ENCODE measurements at regions of chr1 and their contacts with region 1.

Region 1: DNA sequence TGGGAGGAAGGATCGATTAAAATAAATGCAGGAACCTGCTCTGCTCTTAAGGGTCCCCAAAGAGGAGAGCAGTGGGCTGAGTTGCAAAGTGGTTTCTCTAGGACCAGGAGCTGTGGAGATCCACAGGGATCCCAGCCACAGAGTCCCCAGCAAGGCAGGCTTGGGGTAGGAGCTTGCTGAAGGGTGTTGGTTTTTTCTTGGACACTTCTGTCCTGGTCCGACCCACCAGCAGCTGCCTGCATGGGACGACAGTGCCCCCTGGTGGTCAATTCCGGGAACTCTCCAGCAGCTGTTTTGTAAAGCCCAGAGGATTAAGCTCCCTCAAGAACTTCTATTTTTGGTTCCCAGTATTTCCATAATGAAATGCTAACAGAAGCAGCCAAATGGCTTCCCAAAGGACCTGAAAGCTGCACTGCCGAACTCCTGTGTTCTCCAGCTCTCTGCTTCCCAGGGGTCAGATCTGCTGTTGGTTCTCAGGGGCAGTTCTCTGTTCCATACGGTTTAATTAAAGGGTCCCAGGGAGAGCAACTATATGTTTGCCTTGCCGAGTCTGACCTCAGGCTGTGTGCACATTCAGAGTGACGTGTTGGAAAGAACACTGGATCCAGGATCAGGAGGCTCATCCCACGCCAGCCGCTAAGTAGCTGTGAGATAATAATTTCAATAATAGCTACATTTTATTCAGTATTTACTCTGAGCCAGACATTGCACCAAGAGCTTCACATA is 23.2 kb downstream of the NENF start:
- DNase-seq: peak; percentile 91
- ATAC-seq: peak; percentile 78
- H3K4me3 Mint-ChIP-seq: no peak overlapping the region
- H3K27ac Mint-ChIP-seq: no peak overlapping the region
- H3K4me1 Mint-ChIP-seq: peaks cover 4% of the 10 kb centered on the region
- H3K27me3 Mint-ChIP-seq: no peaks in the 10 kb centered on the region
- CTCF ChIP-seq: peak; percentile 99

Region 2: GRCh38 chr1:211698161-211699026 is 757.6 kb before region 1 on chr1:
- CTCF ChIA-PET with region 1: interaction called, 30 read pairs
- POLR2A ChIA-PET with region 1: no interaction called
- intact Hi-C with region 1: no loop called
- DNase-seq: peak; percentile 92
- ATAC-seq: peak; percentile 95
- H3K4me3 Mint-ChIP-seq: peak overlapping the region; percentile 33
- H3K27ac Mint-ChIP-seq: no peak overlapping the region
- H3K4me1 Mint-ChIP-seq: peaks cover 24% of the 10 kb centered on the region
- H3K27me3 Mint-ChIP-seq: peaks cover 1% of the 10 kb centered on the region
- CTCF ChIP-seq: peak; percentile 95

Region 3: DNA sequence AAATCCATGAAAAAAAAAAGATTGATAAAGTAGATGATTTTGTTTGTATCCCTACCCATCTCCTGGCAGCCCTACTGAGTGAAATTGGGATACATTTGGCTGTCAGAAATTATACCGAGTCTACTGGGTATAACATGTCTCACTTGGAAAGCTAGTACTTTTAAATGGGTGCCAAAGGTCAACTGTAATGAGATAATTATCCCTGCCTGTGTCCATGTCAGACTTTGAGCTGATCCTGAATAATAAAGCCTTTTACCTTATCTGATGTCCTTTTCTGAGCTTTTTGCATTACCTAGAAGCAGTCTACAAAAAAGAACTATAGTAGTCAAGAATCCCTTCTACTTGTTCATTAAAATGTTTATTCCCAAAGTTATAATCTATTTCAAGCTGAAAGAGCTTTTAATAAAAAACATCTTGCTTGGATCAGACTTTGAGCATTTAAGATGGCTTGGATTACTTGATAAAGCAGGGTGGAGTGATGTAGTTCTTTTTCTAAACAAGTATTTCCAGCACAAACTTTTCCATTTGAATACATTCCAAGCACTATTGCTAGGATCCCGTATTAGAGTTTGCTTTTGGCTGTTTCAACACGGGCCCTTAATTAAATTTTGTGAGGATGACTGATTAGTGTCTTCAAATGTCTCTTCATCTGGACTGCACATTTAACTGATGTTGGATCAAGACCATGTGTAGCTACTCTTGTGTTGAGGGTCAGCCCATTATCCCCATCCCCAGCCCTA is 351.2 kb before region 1 on chr1:
- CTCF ChIA-PET with region 1: interaction called, 24 read pairs
- POLR2A ChIA-PET with region 1: no interaction called
- intact Hi-C with region 1: no loop called
- DNase-seq: no peak
- ATAC-seq: no peak
- H3K4me3 Mint-ChIP-seq: no peak overlapping the region
- H3K27ac Mint-ChIP-seq: no peak overlapping the region
- H3K4me1 Mint-ChIP-seq: peaks cover 19% of the 10 kb centered on the region
- H3K27me3 Mint-ChIP-seq: no peaks in the 10 kb centered on the region
- CTCF ChIP-seq: no peak

Region 4: DNA sequence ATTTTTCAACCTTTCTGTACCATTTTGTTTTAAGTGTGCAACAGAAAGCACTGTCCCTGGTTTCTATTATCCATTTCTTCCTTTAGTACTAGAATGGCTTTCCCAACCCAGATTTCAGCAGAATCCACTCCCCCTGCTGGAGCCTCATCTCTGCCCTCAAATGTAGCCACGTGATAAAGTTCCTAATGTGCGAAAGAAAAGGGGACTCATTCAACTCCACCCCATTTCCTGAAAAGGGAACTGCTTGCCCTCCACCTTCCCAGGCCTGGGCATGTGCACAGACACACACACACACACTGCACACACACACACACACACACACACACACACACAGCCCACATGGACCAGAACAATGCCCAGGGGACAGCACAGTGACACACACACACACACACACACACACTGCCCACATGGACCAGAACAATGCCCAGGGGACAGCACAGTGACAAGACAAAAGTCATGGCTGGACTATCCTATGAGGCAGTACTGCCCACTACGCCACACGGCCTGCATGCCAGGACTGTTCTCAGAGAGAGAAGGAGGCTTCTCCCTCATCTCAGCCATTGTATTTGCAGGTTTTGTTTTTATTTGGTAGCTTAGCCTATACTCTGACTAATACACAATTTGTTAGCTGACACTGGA is 74.5 kb before region 1 on chr1:
- CTCF ChIA-PET with region 1: interaction called, 35 read pairs
- POLR2A ChIA-PET with region 1: no interaction called
- intact Hi-C with region 1: no loop called
- DNase-seq: no peak
- ATAC-seq: no peak
- H3K4me3 Mint-ChIP-seq: no peak overlapping the region
- H3K27ac Mint-ChIP-seq: no peak overlapping the region
- H3K4me1 Mint-ChIP-seq: no peaks in the 10 kb centered on the region
- H3K27me3 Mint-ChIP-seq: no peaks in the 10 kb centered on the region
- CTCF ChIP-seq: no peak

Region 5: GRCh38 chr1:212477014-212477679 is 21.2 kb after region 1 on chr1:
- CTCF ChIA-PET with region 1: interaction called, 104 read pairs
- POLR2A ChIA-PET with region 1: interaction called, 3 read pairs
- intact Hi-C with region 1: no loop called
- DNase-seq: peak; percentile 87
- ATAC-seq: peak; percentile 93
- H3K4me3 Mint-ChIP-seq: no peak overlapping the region
- H3K27ac Mint-ChIP-seq: no peak overlapping the region
- H3K4me1 Mint-ChIP-seq: peaks cover 22% of the 10 kb centered on the region
- H3K27me3 Mint-ChIP-seq: peaks cover 7% of the 10 kb centered on the region
- CTCF ChIP-seq: peak; percentile 84

Region 6: GRCh38 chr1:212595787-212596714 is 140.1 kb after region 1 on chr1:
- CTCF ChIA-PET with region 1: no interaction called
- POLR2A ChIA-PET with region 1: no interaction called
- intact Hi-C with region 1: no loop called
- DNase-seq: peak; percentile 70
- ATAC-seq: peak; percentile 92
- H3K4me3 Mint-ChIP-seq: peak overlapping the region; percentile 62
- H3K27ac Mint-ChIP-seq: peak overlapping the region; percentile 94
- H3K4me1 Mint-ChIP-seq: peaks cover 30% of the 10 kb centered on the region
- H3K27me3 Mint-ChIP-seq: peaks cover 6% of the 10 kb centered on the region
- CTCF ChIP-seq: peak; percentile 66

Region 7: DNA sequence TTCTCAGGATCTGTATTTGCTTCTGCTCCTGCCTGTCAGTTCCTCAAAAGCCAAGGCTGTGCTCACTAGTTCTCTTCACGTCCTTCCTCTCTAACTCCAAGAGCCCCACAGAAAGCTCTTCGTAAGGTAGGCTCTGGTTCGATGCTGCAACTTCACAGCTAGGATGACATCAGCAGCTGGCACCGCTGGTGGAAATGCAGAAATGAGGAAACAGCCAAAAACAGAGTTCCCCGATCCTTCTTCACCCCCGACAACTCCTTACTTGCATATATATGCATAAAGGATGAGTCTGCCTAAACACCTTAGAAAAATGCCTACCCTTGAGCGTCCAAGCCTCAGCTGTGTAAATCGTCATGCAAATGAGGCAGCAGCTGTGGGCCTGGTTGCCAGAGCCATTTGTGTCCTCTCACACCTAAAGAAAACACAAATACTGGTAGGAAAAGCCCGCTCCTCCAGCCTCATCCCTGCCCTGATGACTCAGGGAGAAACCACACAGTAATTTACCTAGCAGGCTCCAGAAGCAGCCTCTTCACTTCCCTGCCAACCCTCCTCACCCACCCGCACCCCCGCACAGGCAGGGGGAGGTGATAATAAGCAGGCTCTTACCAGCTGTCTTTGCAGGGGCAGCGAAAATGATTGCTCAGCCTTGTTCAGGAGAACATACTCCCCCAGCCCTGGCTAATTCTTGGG is 215.5 kb after region 1 on chr1:
- CTCF ChIA-PET with region 1: interaction called, 20 read pairs
- POLR2A ChIA-PET with region 1: no interaction called
- intact Hi-C with region 1: no loop called
- DNase-seq: peak; percentile 33
- ATAC-seq: peak; percentile 39
- H3K4me3 Mint-ChIP-seq: no peak overlapping the region
- H3K27ac Mint-ChIP-seq: no peak overlapping the region
- H3K4me1 Mint-ChIP-seq: peaks cover 24% of the 10 kb centered on the region
- H3K27me3 Mint-ChIP-seq: peaks cover 26% of the 10 kb centered on the region
- CTCF ChIP-seq: no peak